WTC11 (cell line): ENCODE measurements at regions of chr5 and their contacts with region 1.

Region 1: DNA sequence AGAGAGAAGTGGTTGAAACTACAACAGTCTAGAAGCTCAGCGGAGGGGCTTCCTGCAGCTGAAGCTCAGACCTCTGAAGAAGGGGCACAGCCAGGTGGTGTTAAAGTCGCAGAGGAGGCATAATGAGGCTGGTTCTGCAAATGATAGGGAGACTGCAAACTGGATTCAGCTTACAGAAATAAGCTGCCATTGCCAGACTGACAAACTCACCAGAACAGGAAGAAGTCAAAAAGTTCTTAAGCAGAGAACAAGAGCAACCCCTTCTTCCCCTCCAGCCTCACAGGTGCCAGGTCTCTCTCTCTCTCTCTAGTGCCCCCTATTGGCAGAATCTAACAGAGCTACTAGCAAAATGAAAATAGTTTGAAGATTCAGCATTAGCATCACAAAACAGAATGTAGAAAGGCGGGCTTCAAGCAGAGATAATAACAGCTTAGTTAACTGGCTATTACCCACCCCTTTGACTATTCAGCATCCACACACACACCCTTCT is 76.7 kb downstream of the GRAMD2B start:
- DNase-seq: no peak
- ATAC-seq: peak; percentile 86
- H3K4me3 Mint-ChIP-seq: no peak overlapping the region
- H3K27ac Mint-ChIP-seq: no peak overlapping the region
- H3K4me1 Mint-ChIP-seq: peaks cover 10% of the 10 kb centered on the region
- H3K27me3 Mint-ChIP-seq: no peaks in the 10 kb centered on the region
- CTCF ChIP-seq: peak; percentile 60

Region 2: GRCh38 chr5:126274076-126274762 is 225.7 kb before region 1 on chr5:
- CTCF ChIA-PET with region 1: no interaction called
- POLR2A ChIA-PET with region 1: no interaction called
- DNase-seq: no peak
- ATAC-seq: no peak
- H3K4me3 Mint-ChIP-seq: no peak overlapping the region
- H3K27ac Mint-ChIP-seq: no peak overlapping the region
- H3K4me1 Mint-ChIP-seq: no peaks in the 10 kb centered on the region
- H3K27me3 Mint-ChIP-seq: no peaks in the 10 kb centered on the region
- CTCF ChIP-seq: no peak

Region 3: DNA sequence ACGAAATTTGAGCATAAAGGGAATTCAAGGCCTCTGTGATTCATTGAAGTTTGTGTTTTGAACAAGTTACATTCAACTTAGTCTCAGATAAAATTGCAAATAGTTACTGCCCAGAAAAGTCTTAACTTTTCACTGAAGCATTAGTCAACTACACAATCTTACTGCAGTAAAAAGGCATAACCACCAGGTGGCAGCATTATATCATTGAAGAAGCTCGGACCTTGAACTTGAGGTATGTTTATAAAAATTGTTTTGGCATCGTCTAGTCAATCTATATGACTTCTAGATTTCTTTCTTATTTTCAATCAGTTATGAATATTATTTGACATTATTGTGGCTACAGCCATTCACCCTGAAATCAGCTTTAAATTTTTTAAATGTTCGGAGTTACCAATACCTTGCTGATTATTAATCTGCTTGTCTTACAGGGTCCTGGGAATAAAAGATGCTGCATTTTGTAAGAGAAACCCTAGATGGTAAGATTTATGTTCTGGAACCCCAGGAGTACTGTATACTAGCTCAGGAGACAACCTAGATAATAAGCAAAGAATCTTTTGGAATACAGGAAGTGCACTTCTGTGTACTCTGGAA is 160.6 kb before region 1 on chr5:
- CTCF ChIA-PET with region 1: interaction called, 10 read pairs
- POLR2A ChIA-PET with region 1: no interaction called
- DNase-seq: peak; percentile 14
- ATAC-seq: no peak
- H3K4me3 Mint-ChIP-seq: no peak overlapping the region
- H3K27ac Mint-ChIP-seq: no peak overlapping the region
- H3K4me1 Mint-ChIP-seq: peaks cover 24% of the 10 kb centered on the region
- H3K27me3 Mint-ChIP-seq: no peaks in the 10 kb centered on the region; the same call in 1 of the 2 replicates
- CTCF ChIP-seq: peak; percentile 80

Region 4: DNA sequence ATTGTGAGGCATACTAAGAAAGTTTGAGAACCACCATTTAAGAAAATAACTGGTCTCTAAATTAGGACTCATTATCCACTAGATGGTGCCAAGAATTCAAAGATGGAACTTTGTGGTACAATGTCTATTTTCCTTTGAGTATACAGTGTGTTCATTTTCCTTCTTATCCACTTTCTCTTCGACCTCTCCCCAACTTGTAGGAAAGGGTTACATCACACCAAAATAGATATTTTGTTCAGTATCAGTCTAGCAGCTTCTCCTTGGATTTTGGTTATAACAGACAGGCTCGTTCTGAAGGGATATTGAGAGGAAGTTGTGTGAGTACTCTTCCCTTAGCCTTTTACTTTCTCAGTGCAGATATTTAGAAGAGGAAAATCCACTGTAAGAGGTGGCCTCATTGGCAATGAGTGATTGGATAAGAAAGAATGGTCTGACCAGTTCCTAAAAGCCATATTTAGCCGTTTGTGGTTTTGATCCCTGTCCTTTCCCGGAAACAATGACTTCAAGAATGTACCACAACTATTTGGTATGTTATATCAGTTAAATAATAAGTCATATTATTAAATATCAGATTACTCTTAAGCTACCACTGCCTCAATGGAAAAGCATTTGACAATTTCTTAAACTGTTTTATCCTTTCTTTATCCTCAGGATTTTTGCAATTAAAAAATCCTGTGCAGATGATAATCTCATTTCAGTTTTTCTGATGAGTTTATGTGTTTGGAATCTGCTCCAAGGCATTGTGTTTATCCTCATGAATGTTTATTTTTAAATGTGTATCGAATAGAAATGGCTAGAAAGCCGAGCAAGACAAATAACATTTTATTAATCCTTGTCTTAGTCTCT is 145.7 kb before region 1 on chr5:
- CTCF ChIA-PET with region 1: interaction called, 24 read pairs
- POLR2A ChIA-PET with region 1: no interaction called
- DNase-seq: no peak
- ATAC-seq: peak; percentile 16; the same call in 1 of the 2 replicates
- H3K4me3 Mint-ChIP-seq: no peak overlapping the region
- H3K27ac Mint-ChIP-seq: peak overlapping the region; percentile 60; the same call in 1 of the 2 replicates
- H3K4me1 Mint-ChIP-seq: peaks cover 25% of the 10 kb centered on the region
- H3K27me3 Mint-ChIP-seq: no peaks in the 10 kb centered on the region
- CTCF ChIP-seq: no peak

Region 5: GRCh38 chr5:126519634-126520592 is 20.0 kb after region 1 on chr5:
- CTCF ChIA-PET with region 1: interaction called, 26 read pairs
- POLR2A ChIA-PET with region 1: no interaction called
- DNase-seq: no peak
- ATAC-seq: no peak
- H3K4me3 Mint-ChIP-seq: no peak overlapping the region
- H3K27ac Mint-ChIP-seq: no peak overlapping the region
- H3K4me1 Mint-ChIP-seq: peaks cover 9% of the 10 kb centered on the region; the same call in 1 of the 2 replicates
- H3K27me3 Mint-ChIP-seq: no peaks in the 10 kb centered on the region
- CTCF ChIP-seq: no peak

Region 6: DNA sequence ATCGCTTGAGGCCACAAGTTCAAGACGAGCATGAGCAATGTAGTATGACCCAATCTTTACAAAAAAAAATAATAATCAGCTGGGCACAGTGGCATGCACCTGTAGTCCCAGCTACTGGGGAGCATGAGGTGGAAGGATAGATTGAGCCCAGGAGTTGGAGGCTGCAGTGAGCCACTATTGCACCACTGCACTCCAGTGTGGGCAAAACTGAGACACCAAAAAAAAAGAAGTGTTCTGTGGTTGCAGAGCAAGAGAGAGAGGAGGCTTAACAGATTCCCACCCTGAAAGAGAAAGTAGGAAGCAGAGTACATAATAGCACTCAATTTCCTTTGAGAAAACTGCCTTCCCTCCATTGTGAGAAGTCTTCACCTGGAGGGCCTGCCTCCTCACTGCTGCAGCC is 42.5 kb after region 1 on chr5:
- CTCF ChIA-PET with region 1: interaction called, 13 read pairs
- POLR2A ChIA-PET with region 1: no interaction called
- DNase-seq: no peak
- ATAC-seq: no peak
- H3K4me3 Mint-ChIP-seq: no peak overlapping the region
- H3K27ac Mint-ChIP-seq: peak overlapping the region; percentile 10; the same call in 1 of the 2 replicates
- H3K4me1 Mint-ChIP-seq: peaks cover 4% of the 10 kb centered on the region; the same call in 1 of the 2 replicates
- H3K27me3 Mint-ChIP-seq: no peaks in the 10 kb centered on the region
- CTCF ChIP-seq: no peak

Region 7: GRCh38 chr5:126583761-126584160 is 83.9 kb after region 1 on chr5:
- CTCF ChIA-PET with region 1: no interaction called
- POLR2A ChIA-PET with region 1: no interaction called
- DNase-seq: no peak
- ATAC-seq: no peak
- H3K4me3 Mint-ChIP-seq: no peak overlapping the region
- H3K27ac Mint-ChIP-seq: no peak overlapping the region
- H3K4me1 Mint-ChIP-seq: no peaks in the 10 kb centered on the region
- H3K27me3 Mint-ChIP-seq: no peaks in the 10 kb centered on the region
- CTCF ChIP-seq: no peak